ENCODE measurements at regions of chr6 and their contacts with region 1.

Region 1: DNA sequence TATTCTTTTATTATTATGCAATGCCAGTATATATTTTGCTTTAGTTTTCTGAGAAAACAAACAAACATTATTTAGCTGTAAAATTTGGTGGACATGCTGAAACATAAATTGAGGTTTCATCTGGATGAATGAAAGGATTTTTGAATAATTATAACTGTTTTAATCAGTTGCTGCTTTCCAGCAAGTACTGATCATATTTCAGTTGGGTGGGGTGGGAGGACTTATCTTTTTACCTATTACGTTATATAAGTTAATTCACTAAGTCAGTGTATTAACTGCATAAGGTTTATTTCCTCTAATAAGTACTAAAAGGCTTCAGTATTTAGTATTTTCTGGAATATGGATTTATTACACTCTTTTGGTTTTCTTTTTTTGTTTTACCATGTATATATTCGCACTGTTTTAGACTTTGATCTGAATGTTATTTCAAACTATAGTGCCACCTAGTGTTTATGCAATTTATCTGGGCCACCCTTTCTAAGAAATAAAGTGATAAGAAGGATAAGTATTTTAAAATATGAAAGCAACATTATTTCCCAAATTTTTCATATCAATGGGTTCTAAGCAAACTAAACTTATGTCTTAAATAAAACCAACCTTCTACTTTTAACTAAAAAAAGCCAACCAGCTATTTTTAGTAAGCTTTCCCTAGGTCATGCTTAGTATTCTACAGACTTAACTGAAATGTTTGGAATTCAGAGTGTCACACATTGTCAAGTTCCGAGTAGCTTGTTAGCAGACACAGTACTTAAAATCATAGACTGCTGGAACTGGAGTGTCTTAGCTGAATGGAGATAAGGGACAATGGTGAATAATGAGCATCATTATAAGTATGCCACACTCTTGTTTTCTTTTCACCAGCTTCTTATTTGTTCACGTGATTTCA is 105.4 kb upstream of the MCHR2 start:
- DNase-seq: peak in 2 of 3 donors; percentile 30 to 33
- H3K4me3 ChIP-seq: no peak overlapping the region
- H3K27ac ChIP-seq: no peak overlapping the region
- H3K4me1 ChIP-seq: no peaks in the 10 kb centered on the region
- H3K27me3 ChIP-seq: peaks cover 0 to 8% (median 4%) of the 10 kb centered on the region in 5 experiments

Region 2: GRCh38 chr6:99868074-99868702 is 231.2 kb before region 1 on chr6:
- CTCF ChIA-PET with region 1: interaction called, 14 read pairs
- POLR2A ChIA-PET with region 1: no interaction called
- DNase-seq: peak; percentile 58 to 78 (median 72)
- H3K4me3 ChIP-seq: no peak overlapping the region
- H3K27ac ChIP-seq: no peak overlapping the region
- H3K4me1 ChIP-seq: no peaks in the 10 kb centered on the region
- H3K27me3 ChIP-seq: peaks cover 5 to 50% (median 7%) of the 10 kb centered on the region in 5 experiments

Region 3: GRCh38 chr6:100084291-100084953 is 15.0 kb before region 1 on chr6:
- CTCF ChIA-PET with region 1: no interaction called
- POLR2A ChIA-PET with region 1: no interaction called
- DNase-seq: no peak
- H3K4me3 ChIP-seq: no peak overlapping the region
- H3K27ac ChIP-seq: no peak overlapping the region
- H3K4me1 ChIP-seq: no peaks in the 10 kb centered on the region
- H3K27me3 ChIP-seq: no peaks in the 10 kb centered on the region

Region 4: GRCh38 chr6:100194535-100194934 is 95.1 kb after region 1 on chr6:
- CTCF ChIA-PET with region 1: no interaction called
- POLR2A ChIA-PET with region 1: no interaction called
- DNase-seq: no peak
- H3K4me3 ChIP-seq: no peak overlapping the region
- H3K27ac ChIP-seq: no peak overlapping the region
- H3K4me1 ChIP-seq: no peaks in the 10 kb centered on the region
- H3K27me3 ChIP-seq: peaks cover 0 to 7% (median 0%) of the 10 kb centered on the region in 5 experiments

Region 5: DNA sequence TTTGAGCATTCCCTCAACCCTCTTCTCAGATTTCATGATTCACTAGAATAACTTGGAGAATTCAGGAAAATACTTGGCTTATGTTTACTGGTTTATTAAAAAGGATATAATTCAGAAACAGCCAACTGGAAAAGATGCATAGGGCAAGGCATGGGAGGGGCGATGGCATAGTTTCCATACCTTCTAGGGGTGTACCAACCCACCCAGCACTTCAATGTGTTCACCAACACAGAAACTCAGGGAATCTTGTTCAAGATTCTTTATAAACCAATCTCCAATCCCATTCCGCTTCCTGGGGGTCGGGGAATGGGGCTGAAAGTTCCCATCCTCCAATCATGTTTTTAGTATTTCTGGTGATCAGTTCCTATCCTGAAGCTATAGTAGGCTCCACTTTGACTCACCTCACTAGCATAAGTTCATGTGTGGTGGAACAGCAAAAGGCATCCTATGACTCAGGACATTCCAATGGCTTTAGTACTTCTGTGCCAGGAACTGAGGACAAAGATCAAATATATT is 200.8 kb after region 1 on chr6:
- CTCF ChIA-PET with region 1: no interaction called
- POLR2A ChIA-PET with region 1: no interaction called
- DNase-seq: no peak
- H3K4me3 ChIP-seq: no peak overlapping the region
- H3K27ac ChIP-seq: no peak overlapping the region
- H3K4me1 ChIP-seq: no peaks in the 10 kb centered on the region
- H3K27me3 ChIP-seq: peaks cover 0 to 4% (median 0%) of the 10 kb centered on the region in 5 experiments